Heart left ventricle (tissue), 16 donors: ENCODE measurements at regions of chr14 and their contacts with region 1.

Region 1: DNA sequence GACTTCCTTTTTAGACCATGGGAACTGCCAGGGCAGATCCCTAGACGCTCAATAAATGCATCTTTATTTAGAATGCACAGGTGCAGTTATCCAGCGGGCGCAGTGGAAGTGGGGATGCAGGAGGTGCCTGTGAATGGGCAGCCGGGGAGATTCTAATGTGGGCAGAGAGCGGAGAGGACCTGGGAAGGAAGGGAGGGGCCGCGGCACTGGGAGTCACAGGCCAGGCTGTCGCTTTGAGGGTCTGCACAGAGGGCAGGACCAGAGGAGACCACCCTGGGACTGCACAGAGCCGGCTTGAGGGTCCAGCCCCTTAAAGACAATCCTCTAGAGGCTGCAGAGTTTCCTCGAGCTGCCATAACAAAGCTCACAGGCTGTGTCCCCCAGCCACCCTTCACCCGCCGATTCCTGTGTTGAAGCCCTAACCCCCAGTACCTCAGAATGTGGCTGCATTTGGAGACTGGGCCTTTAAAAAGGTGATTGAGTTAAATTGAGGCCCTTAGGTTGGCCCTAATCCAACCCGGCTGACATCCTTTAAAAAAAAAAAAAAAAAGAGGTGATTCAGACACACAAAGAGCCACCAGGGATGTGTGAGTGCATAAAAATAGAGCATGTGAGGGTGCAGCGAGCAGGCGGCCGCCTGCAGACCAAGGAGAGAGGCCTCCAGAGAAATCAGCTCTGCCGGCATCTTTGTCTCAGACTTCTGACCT is 44.4 kb upstream of the PPP2R5C start:
- DNase-seq: no peak
- ATAC-seq: no peak
- H3K4me3 ChIP-seq: no peak overlapping the region
- H3K27ac ChIP-seq: no peak overlapping the region
- H3K4me1 ChIP-seq: peaks cover 3 to 23% (median 10%) of the 10 kb centered on the region in 12 donors
- H3K27me3 ChIP-seq: no peaks in the 10 kb centered on the region
- CTCF ChIP-seq: no peak
- POLR2A ChIP-seq: no peak

Region 2: GRCh38 chr14:101520621-101521472 is 196.3 kb before region 1 on chr14:
- intact Hi-C with region 1: no loop called
- DNase-seq: peak in 1 of 5 donors; percentile 49
- ATAC-seq: peak in 2 of 4 donors; percentile 8 to 21
- H3K4me3 ChIP-seq: no peak overlapping the region
- H3K27ac ChIP-seq: no peak overlapping the region
- H3K4me1 ChIP-seq: no peaks in the 10 kb centered on the region
- H3K27me3 ChIP-seq: peaks cover 0 to 6% (median 0%) of the 10 kb centered on the region in 9 donors
- CTCF ChIP-seq: no peak
- POLR2A ChIP-seq: no peak

Region 3: DNA sequence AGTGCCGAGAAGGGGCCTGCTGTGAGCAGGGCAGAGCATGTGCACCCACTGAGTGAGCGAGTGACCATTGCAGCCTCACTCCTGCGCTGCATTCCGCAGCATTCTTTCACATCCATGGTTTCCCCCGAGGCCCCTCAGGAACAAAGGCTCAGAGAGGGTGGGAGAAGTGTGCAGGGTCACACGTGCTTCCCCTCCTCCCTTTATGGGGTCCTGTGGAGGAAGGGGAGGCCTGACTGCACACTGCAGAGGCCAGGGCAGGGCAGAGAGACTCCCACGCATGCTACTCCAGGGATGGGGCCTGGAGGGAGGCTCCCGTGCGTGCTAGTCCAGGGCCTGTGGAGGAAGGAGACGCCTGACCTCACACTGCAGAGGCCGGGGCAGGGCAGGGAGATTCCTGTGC is 92.6 kb before region 1 on chr14:
- intact Hi-C with region 1: no loop called
- DNase-seq: no peak
- ATAC-seq: no peak
- H3K4me3 ChIP-seq: no peak overlapping the region
- H3K27ac ChIP-seq: no peak overlapping the region
- H3K4me1 ChIP-seq: peaks cover 0 to 12% (median 9%) of the 10 kb centered on the region in 12 donors
- H3K27me3 ChIP-seq: no peaks in the 10 kb centered on the region
- CTCF ChIP-seq: no peak
- POLR2A ChIP-seq: no peak

Region 4: DNA sequence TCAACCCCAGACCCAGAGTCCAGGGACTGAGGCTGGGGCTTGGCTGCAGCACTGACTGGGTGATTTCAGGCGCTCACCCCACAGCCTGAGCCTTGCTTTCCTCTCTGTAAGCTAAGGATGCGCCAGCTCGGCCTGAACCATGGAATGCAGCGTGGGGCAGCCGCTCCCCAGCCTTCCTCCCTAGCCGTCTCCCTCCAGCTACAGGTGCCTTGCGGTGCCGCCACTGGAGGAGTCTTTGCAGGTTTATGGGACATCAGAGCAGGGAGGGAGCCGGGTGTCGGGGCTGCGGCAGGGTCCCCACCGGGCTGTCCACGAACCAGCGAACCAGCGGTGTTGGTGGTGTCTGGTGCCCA is 63.8 kb after region 1 on chr14:
- intact Hi-C with region 1: no loop called
- DNase-seq: no peak
- ATAC-seq: peak in 3 of 4 donors; percentile 31 to 52 (median 37)
- H3K4me3 ChIP-seq: peak overlapping the region; percentile 47 to 78 (median 62)
- H3K27ac ChIP-seq: peak overlapping the region in 6 of 12 donors; percentile 49 to 80 (median 67)
- H3K4me1 ChIP-seq: peaks cover 0 to 44% (median 14%) of the 10 kb centered on the region in 12 donors
- H3K27me3 ChIP-seq: peaks cover 0 to 14% (median 0%) of the 10 kb centered on the region in 9 donors
- CTCF ChIP-seq: no peak
- POLR2A ChIP-seq: no peak

Region 5: GRCh38 chr14:101953151-101953550 is 236.0 kb after region 1 on chr14:
- intact Hi-C with region 1: loop called in 1 of 10 experiments (anchors 10 kb)
- DNase-seq: no peak
- ATAC-seq: no peak
- H3K4me3 ChIP-seq: no peak overlapping the region
- H3K27ac ChIP-seq: no peak overlapping the region
- H3K4me1 ChIP-seq: peaks cover 0 to 22% (median 12%) of the 10 kb centered on the region in 12 donors
- H3K27me3 ChIP-seq: no peaks in the 10 kb centered on the region
- CTCF ChIP-seq: no peak
- POLR2A ChIP-seq: no peak

Region 6: DNA sequence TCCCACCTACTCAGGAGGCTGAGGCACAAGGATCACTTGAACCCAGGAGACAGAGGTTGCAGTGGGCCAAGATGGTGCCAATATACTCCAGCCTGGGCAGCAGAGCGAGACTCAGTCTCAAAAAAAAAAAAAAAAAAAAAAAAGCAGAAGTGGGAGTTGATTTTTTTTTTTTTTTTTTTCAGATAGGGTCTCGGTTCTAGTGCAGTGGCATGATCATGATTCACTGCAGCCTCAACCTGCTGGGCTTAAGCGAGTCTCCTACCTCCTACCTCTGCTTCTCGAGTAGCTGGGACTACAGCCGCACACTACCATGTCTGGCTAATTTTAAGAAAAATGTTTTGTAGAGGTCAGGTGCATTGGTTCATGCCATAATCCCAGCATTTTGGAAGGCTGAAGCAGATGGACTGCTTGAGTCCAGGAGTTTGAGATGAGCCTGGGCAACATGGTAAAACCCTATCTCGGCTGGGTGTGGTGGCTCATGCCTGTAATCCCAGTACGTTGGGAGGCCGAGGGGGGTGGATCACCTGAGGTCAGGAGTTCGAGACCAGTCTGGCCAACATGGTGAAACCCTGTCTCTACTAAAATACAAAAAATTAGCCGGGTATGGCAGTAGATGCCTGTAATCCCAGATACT is 386.1 kb after region 1 on chr14:
- intact Hi-C with region 1: loop called in 1 of 10 experiments (anchors 10 kb)
- DNase-seq: no peak
- ATAC-seq: no peak
- H3K4me3 ChIP-seq: no peak overlapping the region
- H3K27ac ChIP-seq: no peak overlapping the region
- H3K4me1 ChIP-seq: no peaks in the 10 kb centered on the region
- H3K27me3 ChIP-seq: no peaks in the 10 kb centered on the region
- CTCF ChIP-seq: no peak
- POLR2A ChIP-seq: no peak